PC-3 (cell line): ENCODE measurements at regions of chr6 and their contacts with region 1.

Region 1: GRCh38 chr6:53794720-53795253 is at the start of gene LRRC1:
- DNase-seq: peak; percentile 95
- ATAC-seq: peak; percentile 50
- H3K4me3 ChIP-seq: peak within 1 kb of the TSS; percentile 86
- H3K27ac ChIP-seq: peak within 1 kb of the TSS; percentile 66
- H3K4me1 ChIP-seq: peaks cover 27% of the 10 kb centered on the region
- H3K27me3 ChIP-seq: no peaks in the 10 kb centered on the region
- CTCF ChIP-seq: no peak
- total RNA-seq, gene LRRC1: 18.1 and 19.4 TPM in 2 replicates

Region 2: DNA sequence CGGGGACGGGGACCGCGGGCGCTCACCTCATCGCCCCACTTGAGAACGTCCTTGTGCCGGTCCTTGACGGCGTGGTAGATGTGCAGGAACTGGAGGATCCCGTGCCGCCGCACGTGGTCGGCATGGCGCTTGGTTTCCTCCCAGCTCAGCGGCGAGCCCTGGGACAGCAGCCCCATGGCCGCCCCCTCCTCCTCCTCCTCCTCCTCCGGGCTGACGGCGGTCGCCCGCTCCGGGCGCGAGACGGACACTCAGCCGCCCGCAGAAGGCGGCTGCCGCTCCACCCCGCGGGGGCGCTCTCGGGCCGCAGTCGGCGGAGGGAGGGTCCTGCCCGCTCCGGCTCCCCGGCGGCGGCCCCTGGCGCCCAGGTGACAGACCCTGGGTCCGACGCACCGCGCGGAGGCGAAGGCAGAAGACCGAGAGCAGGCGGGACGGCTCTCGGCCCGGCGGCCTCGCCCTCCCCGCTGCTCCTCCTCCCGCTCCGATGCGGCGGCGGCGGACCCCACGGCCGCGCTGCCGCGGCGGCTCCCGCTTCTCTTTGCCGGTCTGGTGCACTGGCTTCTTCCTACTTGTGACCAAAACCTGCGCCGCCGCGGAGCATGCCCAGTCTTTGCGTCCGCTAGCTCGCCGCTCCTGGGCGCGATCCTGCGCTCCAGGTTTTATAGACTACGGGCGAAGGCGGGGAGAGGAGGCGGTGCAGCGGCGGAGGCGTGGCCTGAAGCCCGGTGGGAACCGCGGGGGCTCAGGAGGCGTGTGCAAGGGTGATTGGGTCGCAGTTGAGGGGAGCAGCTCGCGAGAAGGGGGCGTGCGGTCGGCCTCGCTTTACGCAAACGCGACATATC is 250.1 kb before region 1 on chr6 and contains the start of gene GCLC:
- CTCF ChIA-PET with region 1: no interaction called
- POLR2A ChIA-PET with region 1: interaction called, 4 read pairs
- intact Hi-C with region 1: loop called (anchors 10 kb)
- DNase-seq: peak; percentile 96
- ATAC-seq: peak; percentile 55
- H3K4me3 ChIP-seq: peak within 1 kb of the TSS; percentile 92
- H3K27ac ChIP-seq: peak within 1 kb of the TSS; percentile 56
- H3K4me1 ChIP-seq: peaks cover 42% of the 10 kb centered on the region
- H3K27me3 ChIP-seq: no peaks in the 10 kb centered on the region
- CTCF ChIP-seq: peak; percentile 65
- total RNA-seq, gene GCLC: 50.1 and 54.7 TPM in 2 replicates

Region 3: DNA sequence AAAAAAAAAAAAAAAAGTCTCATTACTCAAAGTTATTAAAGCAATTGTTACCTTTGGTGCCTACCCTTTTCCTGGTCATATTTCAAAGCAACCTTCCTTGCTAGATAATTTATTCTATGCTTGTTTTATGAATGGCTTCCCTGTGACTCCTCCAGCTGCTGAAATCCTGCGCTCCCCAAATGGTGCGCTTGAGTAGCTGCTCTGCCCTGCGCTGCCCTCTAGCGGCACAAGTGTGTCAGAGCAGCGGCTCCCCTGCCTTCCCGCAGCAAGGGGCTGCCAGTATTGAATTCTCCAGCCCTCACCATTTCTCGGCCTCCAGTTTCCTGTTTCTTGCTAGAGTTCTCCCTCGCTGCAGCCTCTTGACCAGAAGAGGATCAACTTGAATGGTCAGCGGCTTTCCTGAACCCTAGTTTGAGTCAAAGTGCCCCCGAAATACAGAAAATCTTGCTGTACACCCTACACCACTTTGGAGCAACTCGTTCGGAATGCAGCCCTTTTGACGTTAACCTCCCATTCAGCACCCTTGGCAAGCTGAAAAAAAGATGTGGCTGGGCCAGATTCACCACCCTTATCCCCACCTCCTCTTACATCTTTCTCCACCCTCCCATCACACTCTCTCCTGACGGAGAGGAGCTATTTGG is 68.9 kb before region 1 on chr6:
- CTCF ChIA-PET with region 1: interaction called, 9 read pairs
- POLR2A ChIA-PET with region 1: interaction called, 21 read pairs
- intact Hi-C with region 1: loop called (anchors 1 kb)
- DNase-seq: peak; percentile 83
- ATAC-seq: peak; percentile 83
- H3K4me3 ChIP-seq: no peak overlapping the region
- H3K27ac ChIP-seq: no peak overlapping the region
- H3K4me1 ChIP-seq: peaks cover 17% of the 10 kb centered on the region
- H3K27me3 ChIP-seq: no peaks in the 10 kb centered on the region
- CTCF ChIP-seq: peak; percentile 95

Region 4: DNA sequence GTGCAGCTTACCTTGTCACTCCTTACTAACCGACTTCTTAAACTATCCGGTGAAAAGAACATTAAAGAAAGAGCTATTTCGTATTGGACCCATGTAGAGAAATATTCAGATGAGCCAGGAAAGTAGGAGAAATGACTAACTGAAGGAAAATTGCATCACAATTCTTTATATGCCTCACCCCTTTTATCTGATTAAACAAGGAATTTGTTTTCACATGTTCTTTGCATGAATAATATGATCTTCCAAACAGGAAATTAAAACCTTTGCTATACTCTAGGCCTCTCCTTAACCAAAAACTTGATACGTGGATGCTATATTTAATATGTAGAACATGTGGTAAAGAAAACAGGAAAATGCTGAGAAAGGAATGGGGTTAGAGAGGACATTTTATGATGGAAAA is 41.9 kb before region 1 on chr6:
- CTCF ChIA-PET with region 1: no interaction called
- POLR2A ChIA-PET with region 1: interaction called, 4 read pairs
- intact Hi-C with region 1: loop called (anchors 5 kb)
- DNase-seq: peak; percentile 83
- ATAC-seq: peak; percentile 95
- H3K4me3 ChIP-seq: peak overlapping the region; percentile 14; the same call in 1 of the 2 replicates
- H3K27ac ChIP-seq: peak overlapping the region; percentile 43
- H3K4me1 ChIP-seq: peaks cover 22% of the 10 kb centered on the region
- H3K27me3 ChIP-seq: no peaks in the 10 kb centered on the region
- CTCF ChIP-seq: no peak

Region 5: DNA sequence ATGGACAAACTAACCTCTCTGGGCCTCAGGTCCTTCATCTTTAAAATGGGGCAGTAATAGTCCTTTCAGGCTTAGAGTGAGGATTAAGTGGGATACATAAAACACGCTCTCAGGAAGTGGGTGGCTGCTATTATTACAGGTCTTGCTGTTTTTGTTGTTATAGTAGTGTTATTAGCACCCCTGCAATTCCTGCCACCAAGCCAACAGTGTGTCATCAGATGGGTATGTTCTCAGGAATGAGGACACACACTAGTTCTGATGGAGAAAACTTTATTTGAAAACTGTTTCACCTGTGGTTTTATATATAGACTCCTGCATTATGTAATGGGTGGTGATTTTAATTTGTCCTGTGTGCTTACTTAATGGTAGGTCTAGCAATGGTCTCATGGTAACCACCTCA is 131.7 kb after region 1 on chr6:
- CTCF ChIA-PET with region 1: interaction called, 3 read pairs
- POLR2A ChIA-PET with region 1: interaction called, 3 read pairs
- intact Hi-C with region 1: loop called (anchors 10 kb)
- DNase-seq: peak; percentile 73
- ATAC-seq: peak; percentile 56
- H3K4me3 ChIP-seq: peak overlapping the region; percentile 49
- H3K27ac ChIP-seq: peak overlapping the region; percentile 59
- H3K4me1 ChIP-seq: peaks cover 38% of the 10 kb centered on the region
- H3K27me3 ChIP-seq: no peaks in the 10 kb centered on the region
- CTCF ChIP-seq: no peak

Region 6: DNA sequence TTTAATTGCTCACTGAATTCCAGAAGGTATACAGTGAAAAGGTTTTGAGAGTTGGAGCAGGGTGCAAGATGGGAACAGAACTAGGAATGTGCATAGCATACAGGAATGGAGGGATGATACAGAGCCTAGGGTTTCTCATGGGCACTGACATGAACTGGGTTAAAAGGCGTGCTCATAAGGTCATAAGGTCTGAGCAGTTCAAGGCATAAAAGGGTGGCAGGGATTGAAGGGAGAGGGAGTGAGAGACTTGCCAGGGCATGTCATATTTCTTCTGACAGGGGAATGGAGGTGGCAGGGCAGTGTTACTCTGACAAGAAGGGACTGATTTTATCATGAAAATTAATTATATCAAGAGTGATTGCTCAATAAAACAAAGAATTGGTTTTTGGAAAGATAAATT is 321.2 kb after region 1 on chr6:
- CTCF ChIA-PET with region 1: no interaction called
- POLR2A ChIA-PET with region 1: no interaction called
- intact Hi-C with region 1: no loop called
- DNase-seq: no peak
- ATAC-seq: no peak
- H3K4me3 ChIP-seq: no peak overlapping the region
- H3K27ac ChIP-seq: no peak overlapping the region
- H3K4me1 ChIP-seq: no peaks in the 10 kb centered on the region
- H3K27me3 ChIP-seq: no peaks in the 10 kb centered on the region
- CTCF ChIP-seq: no peak

Region 7: GRCh38 chr6:54291146-54291545 is 496.4 kb after region 1 on chr6:
- CTCF ChIA-PET with region 1: no interaction called
- POLR2A ChIA-PET with region 1: interaction called, 10 read pairs
- intact Hi-C with region 1: no loop called
- DNase-seq: peak; percentile 66
- ATAC-seq: peak; percentile 76
- H3K4me3 ChIP-seq: no peak overlapping the region
- H3K27ac ChIP-seq: peak overlapping the region; percentile 85
- H3K4me1 ChIP-seq: peaks cover 34% of the 10 kb centered on the region
- H3K27me3 ChIP-seq: no peaks in the 10 kb centered on the region
- CTCF ChIP-seq: no peak